Panc1 (cell line): ENCODE measurements at regions of chr7 and their contacts with region 1.

Region 1: DNA sequence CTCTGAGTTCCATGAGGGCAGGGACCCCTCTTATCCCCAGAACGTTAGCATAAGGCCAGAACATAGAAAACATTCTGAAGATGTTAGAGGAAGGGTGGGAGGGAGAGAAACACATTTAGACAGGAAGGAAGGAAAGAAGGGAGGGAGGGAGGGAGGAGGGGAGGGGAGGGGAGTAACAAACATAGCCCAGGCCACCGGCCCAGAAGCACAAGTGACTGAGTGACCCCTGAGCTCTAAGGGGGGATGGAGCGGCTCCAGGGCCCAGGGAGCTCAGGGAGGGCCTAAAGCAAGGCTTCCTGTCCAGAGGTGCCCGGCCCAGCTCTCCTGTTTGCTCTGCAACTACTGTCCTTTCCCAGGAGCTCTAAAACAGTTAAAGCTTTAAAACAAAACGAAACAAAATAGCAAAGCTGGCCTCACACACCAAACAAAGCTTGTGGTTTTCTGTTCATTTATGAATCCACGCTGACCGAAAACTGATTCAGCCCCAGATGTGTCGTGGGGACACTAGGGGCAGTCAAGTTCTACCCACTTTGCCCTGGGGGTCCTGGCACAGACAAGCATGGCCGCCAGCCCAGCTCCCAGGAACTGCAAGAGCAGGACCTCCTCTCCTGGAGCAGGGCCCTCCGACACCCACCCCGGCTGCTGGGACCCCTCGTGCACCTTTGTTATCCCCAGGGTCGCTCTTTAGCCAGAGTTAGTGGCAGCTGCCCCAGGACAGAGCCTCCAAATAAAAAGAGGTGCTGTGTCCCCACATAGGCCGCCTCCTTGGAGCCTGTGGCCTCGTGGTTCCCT is 496.2 kb upstream of the FOXK1 start:
- DNase-seq: no peak
- ATAC-seq: no peak
- H3K4me3 ChIP-seq: no peak overlapping the region
- H3K27ac ChIP-seq: no peak overlapping the region
- H3K4me1 ChIP-seq: no peaks in the 10 kb centered on the region
- H3K27me3 ChIP-seq: no peaks in the 10 kb centered on the region
- CTCF ChIP-seq: no peak

Region 2: GRCh38 chr7:3722396-3722922 is 463.5 kb before region 1 on chr7:
- CTCF ChIA-PET with region 1: no interaction called
- POLR2A ChIA-PET with region 1: no interaction called
- in situ Hi-C with region 1: no loop called
- intact Hi-C with region 1: no loop called
- DNase-seq: no peak
- ATAC-seq: peak; percentile 65
- H3K4me3 ChIP-seq: no peak overlapping the region
- H3K27ac ChIP-seq: peak overlapping the region; percentile 5; the same call in 1 of the 2 replicates
- H3K4me1 ChIP-seq: no peaks in the 10 kb centered on the region
- H3K27me3 ChIP-seq: no peaks in the 10 kb centered on the region
- CTCF ChIP-seq: peak; percentile 55

Region 3: DNA sequence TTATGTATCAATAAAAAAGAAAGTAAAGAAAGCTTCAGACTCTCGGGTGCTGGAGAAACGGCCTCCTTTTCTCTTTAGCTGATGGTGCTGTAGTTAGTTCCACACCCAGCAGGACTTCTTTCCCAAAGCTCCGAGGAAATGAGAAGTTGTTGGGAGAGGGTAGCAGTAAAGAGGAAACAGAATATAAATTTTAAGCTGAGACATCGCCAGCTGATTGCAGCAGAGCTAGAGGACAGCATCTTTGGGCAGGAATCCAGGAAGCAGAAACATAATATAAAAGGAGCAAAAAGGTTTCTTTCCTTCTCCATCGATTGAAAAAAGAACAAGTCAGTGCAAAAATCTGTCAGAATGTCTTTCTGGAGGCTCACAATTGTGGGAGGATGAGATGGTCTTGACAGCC is 120.7 kb before region 1 on chr7:
- CTCF ChIA-PET with region 1: no interaction called
- POLR2A ChIA-PET with region 1: no interaction called
- in situ Hi-C with region 1: no loop called
- intact Hi-C with region 1: no loop called
- DNase-seq: no peak
- ATAC-seq: no peak
- H3K4me3 ChIP-seq: no peak overlapping the region
- H3K27ac ChIP-seq: no peak overlapping the region
- H3K4me1 ChIP-seq: no peaks in the 10 kb centered on the region
- H3K27me3 ChIP-seq: no peaks in the 10 kb centered on the region
- CTCF ChIP-seq: no peak

Region 4: GRCh38 chr7:4345004-4345403 is 159.1 kb after region 1 on chr7:
- CTCF ChIA-PET with region 1: no interaction called
- POLR2A ChIA-PET with region 1: interaction called, 19 read pairs
- in situ Hi-C with region 1: no loop called
- intact Hi-C with region 1: no loop called
- DNase-seq: no peak
- ATAC-seq: no peak
- H3K4me3 ChIP-seq: no peak overlapping the region
- H3K27ac ChIP-seq: no peak overlapping the region
- H3K4me1 ChIP-seq: no peaks in the 10 kb centered on the region
- H3K27me3 ChIP-seq: peaks cover 5% of the 10 kb centered on the region
- CTCF ChIP-seq: no peak

Region 5: DNA sequence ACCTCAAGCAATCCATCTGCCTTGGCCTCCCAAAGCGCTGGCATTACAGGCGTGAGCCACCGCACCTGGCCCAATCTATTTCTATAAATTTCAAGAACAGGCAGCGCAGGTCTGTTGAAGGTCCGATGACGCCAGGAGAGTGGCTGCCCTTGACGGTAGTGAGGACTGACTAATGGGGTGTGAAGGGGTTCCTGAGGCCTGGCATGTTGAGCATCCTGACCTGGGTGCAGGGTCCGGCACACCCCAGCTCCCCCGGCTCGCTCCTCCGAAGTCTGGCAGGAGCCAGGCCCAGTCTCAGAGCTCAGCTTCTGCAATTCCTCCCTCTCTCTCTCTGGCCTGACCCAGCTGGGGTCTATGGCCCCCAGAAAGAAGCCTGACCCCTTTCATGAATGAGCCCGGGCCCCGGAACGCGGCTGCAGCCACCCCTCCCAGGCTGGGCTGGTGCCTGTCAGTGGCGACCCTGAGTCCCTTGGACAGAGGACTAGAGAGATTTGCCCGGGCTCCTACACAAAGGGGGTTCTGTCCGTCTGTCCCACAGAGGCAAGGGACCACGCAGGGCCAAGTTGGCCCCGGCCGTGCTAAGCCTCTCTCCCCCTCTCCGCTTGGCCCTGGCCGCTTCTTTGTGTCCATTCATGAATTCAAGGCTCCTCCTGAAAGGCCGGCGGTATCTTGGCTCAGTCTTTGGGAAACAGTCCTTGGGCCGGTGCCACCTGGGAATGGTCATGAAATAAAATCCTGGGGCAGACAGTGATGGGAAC is 754.2 kb after region 1 on chr7:
- CTCF ChIA-PET with region 1: no interaction called
- POLR2A ChIA-PET with region 1: no interaction called
- in situ Hi-C with region 1: no loop called
- intact Hi-C with region 1: no loop called
- DNase-seq: no peak
- ATAC-seq: no peak
- H3K4me3 ChIP-seq: no peak overlapping the region
- H3K27ac ChIP-seq: no peak overlapping the region
- H3K4me1 ChIP-seq: no peaks in the 10 kb centered on the region
- H3K27me3 ChIP-seq: no peaks in the 10 kb centered on the region
- CTCF ChIP-seq: no peak

Region 6: GRCh38 chr7:5629941-5630340 is 1444.0 kb after region 1 on chr7:
- CTCF ChIA-PET with region 1: no interaction called
- POLR2A ChIA-PET with region 1: no interaction called
- in situ Hi-C with region 1: no loop called
- intact Hi-C with region 1: no loop called
- DNase-seq: no peak
- ATAC-seq: peak; percentile 74
- H3K4me3 ChIP-seq: no peak overlapping the region
- H3K27ac ChIP-seq: no peak overlapping the region
- H3K4me1 ChIP-seq: no peaks in the 10 kb centered on the region
- H3K27me3 ChIP-seq: no peaks in the 10 kb centered on the region
- CTCF ChIP-seq: no peak